OCI-LY7 (cell line): ENCODE measurements at regions of chr1 and their contacts with region 1.

Region 1: DNA sequence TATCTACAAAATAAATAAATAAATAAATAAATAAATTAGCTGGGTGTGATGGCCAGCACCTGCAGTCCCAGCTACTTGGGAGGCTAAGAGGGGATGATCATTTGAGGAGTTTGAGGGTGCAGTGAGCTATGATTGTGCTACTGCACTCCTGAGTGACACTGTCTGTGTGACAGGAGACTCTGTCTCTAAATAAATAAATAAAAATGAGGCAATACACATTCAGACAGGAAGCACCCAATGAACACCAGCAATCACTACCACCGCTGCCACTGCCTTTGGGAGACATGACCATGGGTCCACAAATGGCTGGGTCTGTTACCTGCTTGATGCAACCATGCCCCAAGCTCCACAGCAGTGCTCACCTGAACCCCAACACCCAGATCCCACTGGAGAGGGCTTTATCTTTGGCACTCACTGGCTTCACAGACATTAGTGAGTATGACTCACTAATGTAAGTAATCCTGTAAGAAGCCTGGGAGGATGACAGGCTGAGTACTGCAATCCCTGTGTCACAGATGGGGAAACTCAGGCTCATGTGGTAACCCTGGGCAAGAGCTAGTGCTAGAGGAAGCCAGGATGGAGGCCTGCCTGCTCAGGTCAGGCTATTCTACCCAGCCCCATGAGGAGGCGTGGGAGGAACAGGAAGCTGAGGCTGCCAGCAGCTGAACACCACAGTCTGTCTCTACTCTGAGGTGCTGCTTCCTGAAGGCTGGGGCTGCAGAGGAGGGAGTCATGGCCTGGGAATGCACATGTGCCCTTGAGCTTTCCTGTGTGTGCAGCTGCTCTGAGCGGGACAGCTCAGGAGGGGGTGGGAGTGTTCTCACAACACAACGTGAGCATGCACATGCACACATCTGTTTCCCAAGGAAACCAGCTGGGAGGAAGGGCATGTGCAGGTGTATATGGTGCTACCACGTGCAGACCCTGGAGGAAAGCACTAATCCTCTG is 43.0 kb downstream of the SLC9A1 start:
- DNase-seq: peak; percentile 80
- H3K4me3 ChIP-seq: no peak overlapping the region
- H3K27ac ChIP-seq: peak overlapping the region; percentile 37
- H3K4me1 ChIP-seq: peaks cover 21% of the 10 kb centered on the region
- CTCF ChIP-seq: peak; percentile 64

Region 2: GRCh38 chr1:27068922-27069321 is 43.0 kb before region 1 on chr1:
- CTCF ChIA-PET with region 1: no interaction called
- POLR2A ChIA-PET with region 1: no interaction called
- intact Hi-C with region 1: no loop called
- DNase-seq: no peak
- H3K4me3 ChIP-seq: no peak overlapping the region
- H3K27ac ChIP-seq: no peak overlapping the region
- H3K4me1 ChIP-seq: peaks cover 9% of the 10 kb centered on the region
- CTCF ChIP-seq: no peak

Region 3: DNA sequence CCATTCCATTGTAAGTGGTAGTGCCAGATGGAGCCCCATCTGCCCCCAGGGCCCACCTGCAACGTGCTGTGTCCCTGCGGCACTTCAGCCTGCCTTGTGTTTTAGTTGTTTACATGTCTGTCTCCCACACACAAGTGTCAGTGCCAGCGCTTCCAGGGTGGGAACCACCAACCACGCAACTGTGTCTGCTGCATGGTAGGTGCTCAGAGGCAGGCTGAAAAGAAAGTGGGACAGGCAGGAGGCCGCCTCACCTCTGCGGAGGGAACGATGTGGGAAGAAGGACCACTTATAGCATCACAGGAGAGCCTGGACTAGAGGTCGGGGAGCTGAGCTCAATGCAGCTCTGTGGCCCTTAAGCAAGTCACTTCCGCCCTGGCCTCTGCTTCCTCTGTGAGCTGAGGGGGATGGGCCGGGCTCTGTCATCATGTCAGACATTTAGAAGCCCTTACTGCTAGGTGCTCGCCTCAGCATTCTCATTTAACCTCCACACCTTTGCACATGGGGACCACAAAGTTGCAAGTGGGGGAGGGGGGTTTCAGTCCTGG is 25.2 kb after region 1 on chr1:
- CTCF ChIA-PET with region 1: no interaction called
- POLR2A ChIA-PET with region 1: interaction called, 3 read pairs
- intact Hi-C with region 1: loop called (anchors 2 kb)
- DNase-seq: peak; percentile 86
- H3K4me3 ChIP-seq: peak overlapping the region; percentile 62
- H3K27ac ChIP-seq: peak overlapping the region; percentile 78
- H3K4me1 ChIP-seq: peaks cover 53% of the 10 kb centered on the region
- CTCF ChIP-seq: no peak

Region 4: GRCh38 chr1:27339213-27339612 is 227.3 kb after region 1 on chr1:
- CTCF ChIA-PET with region 1: no interaction called
- POLR2A ChIA-PET with region 1: no interaction called
- intact Hi-C with region 1: no loop called
- DNase-seq: no peak
- H3K4me3 ChIP-seq: no peak overlapping the region
- H3K27ac ChIP-seq: no peak overlapping the region
- H3K4me1 ChIP-seq: peaks cover 44% of the 10 kb centered on the region
- CTCF ChIP-seq: no peak

Region 5: GRCh38 chr1:27418326-27419185 is 306.7 kb after region 1 on chr1:
- CTCF ChIA-PET with region 1: no interaction called
- POLR2A ChIA-PET with region 1: no interaction called
- intact Hi-C with region 1: no loop called
- DNase-seq: no peak
- H3K4me3 ChIP-seq: no peak overlapping the region
- H3K27ac ChIP-seq: no peak overlapping the region
- H3K4me1 ChIP-seq: peaks cover 34% of the 10 kb centered on the region
- CTCF ChIP-seq: no peak